Endothelial cell of umbilical vein (primary cell): ENCODE measurements at regions of chr7 and their contacts with region 1.

Region 1: GRCh38 chr7:97016381-97017191 is 8.0 kb downstream of the DLX5 start:
- DNase-seq: no peak
- H3K4me3 ChIP-seq: no peak overlapping the region
- H3K27ac ChIP-seq: no peak overlapping the region
- H3K4me1 ChIP-seq: no peaks in the 10 kb centered on the region
- H3K27me3 ChIP-seq: peaks cover 96 to 98% of the 10 kb centered on the region in 2 experiments
- CTCF ChIP-seq: no peak
- POLR2A ChIP-seq: no peak

Region 2: DNA sequence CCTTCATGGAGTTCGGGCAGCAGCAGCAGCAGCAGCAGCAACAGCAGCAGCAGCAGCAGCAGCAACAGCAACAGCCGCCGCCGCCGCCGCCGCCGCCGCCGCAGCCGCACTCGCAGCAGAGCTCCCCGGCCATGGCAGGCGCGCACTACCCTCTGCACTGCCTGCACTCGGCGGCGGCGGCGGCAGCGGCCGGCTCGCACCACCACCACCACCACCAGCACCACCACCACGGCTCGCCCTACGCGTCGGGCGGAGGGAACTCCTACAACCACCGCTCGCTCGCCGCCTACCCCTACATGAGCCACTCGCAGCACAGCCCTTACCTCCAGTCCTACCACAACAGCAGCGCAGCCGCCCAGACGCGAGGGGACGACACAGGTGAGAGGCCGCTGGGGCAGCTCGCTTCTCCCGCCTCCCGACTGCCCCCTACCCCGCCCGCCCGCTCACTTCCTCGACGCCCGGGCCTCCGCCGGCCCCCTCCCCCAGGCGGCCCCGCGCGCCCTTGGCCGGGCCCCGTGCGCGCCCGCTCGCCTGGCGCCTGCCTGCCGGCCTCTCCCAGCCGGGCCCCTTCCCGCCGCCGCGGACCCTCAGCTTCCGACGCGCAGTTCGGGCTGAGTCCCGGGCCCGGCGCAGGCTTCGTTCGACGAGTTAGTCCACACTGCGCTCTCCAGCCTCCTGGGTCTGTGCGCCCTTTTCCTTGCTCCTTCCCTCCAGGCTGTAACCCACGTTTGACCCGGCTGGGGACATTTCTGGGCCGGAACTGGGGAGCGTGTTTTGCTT is 10.4 kb before region 1 on chr7:
- CTCF ChIA-PET with region 1: interaction called, 5 read pairs
- POLR2A ChIA-PET with region 1: no interaction called
- dilution Hi-C with region 1: no loop called
- intact Hi-C with region 1: loop called (anchors 2 kb)
- DNase-seq: peak; percentile 29
- H3K4me3 ChIP-seq: peak overlapping the region in 1 of 3 experiments; percentile 29
- H3K27ac ChIP-seq: no peak overlapping the region
- H3K4me1 ChIP-seq: peaks cover 3% of the 10 kb centered on the region
- H3K27me3 ChIP-seq: peaks cover 81 to 94% of the 10 kb centered on the region in 2 experiments
- CTCF ChIP-seq: no peak
- POLR2A ChIP-seq: no peak

Region 3: GRCh38 chr7:97130417-97131139 is 114.0 kb after region 1 on chr7:
- CTCF ChIA-PET with region 1: no interaction called
- POLR2A ChIA-PET with region 1: no interaction called
- dilution Hi-C with region 1: no loop called
- intact Hi-C with region 1: no loop called
- DNase-seq: no peak
- H3K4me3 ChIP-seq: no peak overlapping the region
- H3K27ac ChIP-seq: no peak overlapping the region
- H3K4me1 ChIP-seq: no peaks in the 10 kb centered on the region
- H3K27me3 ChIP-seq: no peaks in the 10 kb centered on the region
- CTCF ChIP-seq: no peak
- POLR2A ChIP-seq: no peak